WTC11 (cell line): ENCODE measurements at regions of chr3 and their contacts with region 1.

Region 1: DNA sequence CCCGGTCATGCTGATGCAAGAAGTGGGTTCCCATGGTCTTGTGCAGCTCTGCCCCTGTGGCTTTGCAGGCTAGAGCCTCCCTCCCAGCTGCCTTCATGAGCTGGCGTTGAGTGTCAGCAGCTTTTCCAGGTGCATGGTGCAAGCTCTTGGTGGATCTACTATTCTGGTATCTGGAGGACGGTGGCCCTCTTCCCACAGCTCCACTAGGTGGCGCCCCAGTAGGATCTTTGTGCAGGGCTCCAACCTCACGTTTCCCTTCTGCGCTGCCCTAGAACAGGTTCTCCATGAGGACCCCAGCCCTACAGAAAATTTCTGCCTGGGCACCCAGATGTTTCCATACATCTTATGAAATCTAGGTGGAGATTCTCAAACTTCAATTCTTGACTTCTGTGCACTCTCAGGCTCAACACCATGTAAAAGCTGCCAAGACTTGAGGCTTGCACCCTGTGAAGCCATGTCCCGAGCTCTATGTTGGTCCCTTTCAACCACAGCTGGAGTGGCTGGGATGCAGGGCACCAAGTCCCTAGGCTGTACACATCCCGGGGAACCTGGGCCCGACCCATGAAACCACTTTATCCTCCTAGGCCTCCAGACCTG is 238.4 kb upstream of the MDFIC2 start:
- DNase-seq: peak; percentile 74
- ATAC-seq: peak; percentile 76
- H3K4me3 Mint-ChIP-seq: no peak overlapping the region
- H3K27ac Mint-ChIP-seq: no peak overlapping the region
- H3K4me1 Mint-ChIP-seq: peaks cover 26% of the 10 kb centered on the region
- H3K27me3 Mint-ChIP-seq: no peaks in the 10 kb centered on the region
- CTCF ChIP-seq: peak; percentile 68

Region 2: GRCh38 chr3:70400194-70400593 is 150.6 kb before region 1 on chr3:
- CTCF ChIA-PET with region 1: no interaction called
- POLR2A ChIA-PET with region 1: no interaction called
- DNase-seq: no peak
- ATAC-seq: no peak
- H3K4me3 Mint-ChIP-seq: no peak overlapping the region
- H3K27ac Mint-ChIP-seq: no peak overlapping the region
- H3K4me1 Mint-ChIP-seq: peaks cover 4% of the 10 kb centered on the region; the same call in 1 of the 2 replicates
- H3K27me3 Mint-ChIP-seq: no peaks in the 10 kb centered on the region; the same call in 1 of the 2 replicates
- CTCF ChIP-seq: no peak

Region 3: GRCh38 chr3:70631716-70632307 is 81.0 kb after region 1 on chr3:
- CTCF ChIA-PET with region 1: interaction called, 12 read pairs
- POLR2A ChIA-PET with region 1: no interaction called
- DNase-seq: peak; percentile 41
- ATAC-seq: peak; percentile 98
- H3K4me3 Mint-ChIP-seq: no peak overlapping the region
- H3K27ac Mint-ChIP-seq: no peak overlapping the region
- H3K4me1 Mint-ChIP-seq: peaks cover 22% of the 10 kb centered on the region
- H3K27me3 Mint-ChIP-seq: peaks cover 8% of the 10 kb centered on the region
- CTCF ChIP-seq: no peak